Mammary epithelial cell (primary cell): ENCODE measurements at regions of chr6 and their contacts with region 1.

Region 1: GRCh38 chr6:43070028-43070632 is 6.0 kb upstream of the PTK7 start:
- DNase-seq: peak; percentile 40
- H3K4me3 ChIP-seq: no peak overlapping the region
- H3K27ac ChIP-seq: no peak overlapping the region
- H3K4me1 ChIP-seq: no peaks in the 10 kb centered on the region
- H3K27me3 ChIP-seq: no peaks in the 10 kb centered on the region
- CTCF ChIP-seq: peak; percentile 61 to 72

Region 2: GRCh38 chr6:43024436-43024835 is 45.7 kb before region 1 on chr6:
- CTCF ChIA-PET with region 1: no interaction called
- dilution Hi-C with region 1: no loop called
- in situ Hi-C with region 1: no loop called
- intact Hi-C with region 1: no loop called
- DNase-seq: no peak
- H3K4me3 ChIP-seq: no peak overlapping the region
- H3K27ac ChIP-seq: no peak overlapping the region
- H3K4me1 ChIP-seq: peaks cover 7% of the 10 kb centered on the region
- H3K27me3 ChIP-seq: no peaks in the 10 kb centered on the region
- CTCF ChIP-seq: no peak

Region 3: DNA sequence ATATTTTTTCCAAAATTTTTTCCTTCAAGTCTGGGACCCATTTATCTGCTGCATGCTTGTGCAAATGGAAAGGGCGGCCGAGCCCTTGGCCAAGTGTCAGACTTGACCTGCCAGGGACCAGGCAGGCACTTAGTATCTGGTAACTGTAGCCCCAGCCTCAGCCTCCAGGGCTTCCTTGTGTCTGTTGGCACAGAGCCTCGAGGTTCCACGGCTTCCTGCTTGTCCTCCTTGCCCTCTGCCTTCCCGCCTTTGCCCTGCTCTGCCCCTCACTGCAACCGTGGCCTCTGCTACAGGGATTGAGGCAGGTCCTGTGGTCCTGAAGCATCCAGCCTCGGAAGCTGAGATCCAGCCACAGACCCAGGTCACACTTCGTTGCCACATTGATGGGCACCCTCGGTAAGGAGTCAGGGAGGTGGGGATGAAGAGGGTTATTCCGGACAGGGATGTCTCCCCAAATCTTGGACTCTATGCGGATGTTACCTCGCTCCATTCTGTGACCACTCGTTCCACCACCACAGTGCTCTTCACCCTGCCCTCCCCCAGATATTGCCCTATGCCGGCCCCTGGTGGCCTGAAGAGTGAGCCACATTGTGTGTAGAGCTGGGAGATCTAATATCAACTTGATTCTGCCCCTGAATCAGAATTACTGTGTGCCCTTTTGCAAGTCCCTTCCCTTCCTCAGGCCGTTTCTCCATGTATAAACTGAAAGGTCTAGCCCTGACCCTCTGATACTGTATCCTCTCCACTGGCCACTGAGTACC is 59.5 kb after region 1 on chr6:
- CTCF ChIA-PET with region 1: no interaction called
- dilution Hi-C with region 1: no loop called
- in situ Hi-C with region 1: loop called (anchors 5 kb)
- intact Hi-C with region 1: loop called (anchors 1 kb)
- DNase-seq: peak; percentile 46
- H3K4me3 ChIP-seq: no peak overlapping the region
- H3K27ac ChIP-seq: no peak overlapping the region
- H3K4me1 ChIP-seq: peaks cover 30% of the 10 kb centered on the region
- H3K27me3 ChIP-seq: no peaks in the 10 kb centered on the region
- CTCF ChIP-seq: peak; percentile 49 to 78